ENCODE measurements at regions of chr2 and their contacts with region 1.

Region 1: GRCh38 chr2:230068016-230068650 is 591 bp downstream of the SLC16A14 start:
- DNase-seq: peak in 4 of 5 donors; percentile 22 to 51 (median 32)
- H3K4me3 ChIP-seq: peak overlapping the region in 1 of 2 donors; percentile 70
- H3K4me3 Mint-ChIP-seq: peak overlapping the region; percentile 89 to 94 (median 92)
- H3K27ac ChIP-seq: no peak overlapping the region
- H3K27ac Mint-ChIP-seq: peak overlapping the region in 3 of 7 donors; percentile 12 to 67 (median 30)
- H3K4me1 ChIP-seq: peaks cover 12% of the 10 kb centered on the region
- H3K4me1 Mint-ChIP-seq: peaks cover 8 to 15% (median 10%) of the 10 kb centered on the region in 4 donors
- H3K27me3 ChIP-seq: no peaks in the 10 kb centered on the region
- H3K27me3 Mint-ChIP-seq: peaks cover 4 to 11% of the 10 kb centered on the region in 2 donors

Region 2: DNA sequence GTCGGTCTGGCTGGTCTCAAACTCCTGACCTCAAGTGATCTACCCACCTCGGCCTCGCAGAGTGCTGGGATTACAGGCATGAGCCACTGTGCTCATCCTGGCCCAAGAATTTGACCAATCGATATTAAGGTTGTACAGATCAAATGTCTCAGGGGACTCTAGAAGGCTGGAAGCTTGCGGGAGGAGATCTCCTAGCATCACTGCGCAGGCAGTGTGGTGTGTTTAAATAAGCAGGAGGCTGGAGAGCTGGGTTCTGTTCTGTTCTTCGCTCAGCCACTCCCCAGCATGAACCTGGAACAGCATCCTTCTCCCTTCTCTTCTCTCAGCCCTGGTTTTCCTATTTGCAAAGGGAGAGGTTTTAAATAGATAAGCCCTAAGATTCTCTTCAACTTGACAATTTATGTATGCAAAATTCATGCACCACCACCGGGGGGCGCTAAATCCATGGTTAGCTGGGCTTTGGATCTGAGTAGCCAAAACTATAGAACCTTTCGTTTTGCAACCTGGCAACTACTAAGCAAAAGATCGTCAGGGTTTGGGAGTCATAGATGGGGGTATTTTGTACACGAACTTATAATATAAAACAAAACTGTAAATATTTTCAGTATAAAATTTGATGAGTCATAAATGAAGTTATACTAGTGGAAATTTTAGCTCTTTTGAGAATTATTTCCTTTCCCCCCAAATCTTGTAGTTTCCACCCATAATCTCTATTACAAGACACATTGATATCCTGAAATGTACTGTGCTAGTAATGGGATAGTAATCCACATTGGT is 60.0 kb before region 1 on chr2:
- CTCF ChIA-PET with region 1: interaction called, 8 read pairs
- POLR2A ChIA-PET with region 1: no interaction called
- intact Hi-C with region 1: loop called (anchors 1 kb)
- DNase-seq: peak; percentile 65 to 73 (median 69)
- H3K4me3 ChIP-seq: no peak overlapping the region
- H3K4me3 Mint-ChIP-seq: peak overlapping the region in 5 of 8 donors; percentile 22 to 57 (median 51)
- H3K27ac ChIP-seq: no peak overlapping the region
- H3K27ac Mint-ChIP-seq: peak overlapping the region in 1 of 7 donors; percentile 9
- H3K4me1 ChIP-seq: no peaks in the 10 kb centered on the region
- H3K4me1 Mint-ChIP-seq: peaks cover 0 to 4% (median 1%) of the 10 kb centered on the region in 4 donors
- H3K27me3 ChIP-seq: no peaks in the 10 kb centered on the region
- H3K27me3 Mint-ChIP-seq: no peaks in the 10 kb centered on the region

Region 3: DNA sequence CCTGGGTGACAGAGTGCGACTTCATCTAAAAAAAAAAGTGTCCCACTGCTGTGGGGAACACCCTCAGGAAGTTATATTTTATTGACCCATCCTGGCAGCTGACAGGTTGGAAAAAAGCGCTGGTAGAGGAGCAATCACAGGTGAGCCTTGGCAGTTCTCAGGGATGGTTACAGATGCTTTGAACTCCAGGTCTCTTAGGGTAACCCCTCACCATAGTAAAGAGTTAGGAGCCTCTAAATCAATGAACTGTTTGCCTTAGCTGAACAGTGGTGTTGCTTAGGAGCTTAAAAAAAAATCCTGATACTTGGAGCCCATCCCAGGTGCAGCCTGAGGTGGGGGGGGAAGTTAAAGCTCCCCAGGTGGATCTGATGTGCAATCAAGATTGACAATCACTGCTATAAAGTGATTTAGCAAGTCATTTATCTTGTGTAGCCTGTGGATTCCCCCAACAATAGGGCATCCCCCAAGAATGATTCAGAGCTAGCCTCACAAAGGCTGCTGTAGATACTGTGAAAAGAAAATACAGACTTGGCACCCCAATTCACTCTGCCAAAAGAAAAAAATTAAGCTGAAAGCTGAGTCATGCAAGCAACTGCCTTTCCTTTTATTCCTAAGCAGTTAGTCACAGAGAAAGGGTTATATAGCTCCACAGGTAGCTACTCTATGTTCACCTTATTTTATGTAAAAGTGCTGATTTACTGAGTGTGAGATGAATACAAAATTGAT is 14.2 kb before region 1 on chr2:
- CTCF ChIA-PET with region 1: interaction called, 18 read pairs
- POLR2A ChIA-PET with region 1: no interaction called
- intact Hi-C with region 1: no loop called
- DNase-seq: no peak
- H3K4me3 ChIP-seq: no peak overlapping the region
- H3K4me3 Mint-ChIP-seq: no peak overlapping the region
- H3K27ac ChIP-seq: no peak overlapping the region
- H3K27ac Mint-ChIP-seq: no peak overlapping the region
- H3K4me1 ChIP-seq: no peaks in the 10 kb centered on the region
- H3K4me1 Mint-ChIP-seq: no peaks in the 10 kb centered on the region
- H3K27me3 ChIP-seq: no peaks in the 10 kb centered on the region
- H3K27me3 Mint-ChIP-seq: no peaks in the 10 kb centered on the region

Region 4: GRCh38 chr2:230614913-230615332 is 546.8 kb after region 1 on chr2:
- CTCF ChIA-PET with region 1: interaction called, 9 read pairs
- POLR2A ChIA-PET with region 1: interaction called, 3 read pairs
- intact Hi-C with region 1: loop called (anchors 1 kb)
- DNase-seq: no peak
- H3K4me3 ChIP-seq: no peak overlapping the region
- H3K4me3 Mint-ChIP-seq: no peak overlapping the region
- H3K27ac ChIP-seq: no peak overlapping the region
- H3K27ac Mint-ChIP-seq: no peak overlapping the region
- H3K4me1 ChIP-seq: peaks cover 25% of the 10 kb centered on the region
- H3K4me1 Mint-ChIP-seq: peaks cover 9 to 19% (median 16%) of the 10 kb centered on the region in 4 donors
- H3K27me3 ChIP-seq: no peaks in the 10 kb centered on the region
- H3K27me3 Mint-ChIP-seq: no peaks in the 10 kb centered on the region